K562 (cell line): ENCODE measurements at regions of chr19 and their contacts with region 1.

Region 1: DNA sequence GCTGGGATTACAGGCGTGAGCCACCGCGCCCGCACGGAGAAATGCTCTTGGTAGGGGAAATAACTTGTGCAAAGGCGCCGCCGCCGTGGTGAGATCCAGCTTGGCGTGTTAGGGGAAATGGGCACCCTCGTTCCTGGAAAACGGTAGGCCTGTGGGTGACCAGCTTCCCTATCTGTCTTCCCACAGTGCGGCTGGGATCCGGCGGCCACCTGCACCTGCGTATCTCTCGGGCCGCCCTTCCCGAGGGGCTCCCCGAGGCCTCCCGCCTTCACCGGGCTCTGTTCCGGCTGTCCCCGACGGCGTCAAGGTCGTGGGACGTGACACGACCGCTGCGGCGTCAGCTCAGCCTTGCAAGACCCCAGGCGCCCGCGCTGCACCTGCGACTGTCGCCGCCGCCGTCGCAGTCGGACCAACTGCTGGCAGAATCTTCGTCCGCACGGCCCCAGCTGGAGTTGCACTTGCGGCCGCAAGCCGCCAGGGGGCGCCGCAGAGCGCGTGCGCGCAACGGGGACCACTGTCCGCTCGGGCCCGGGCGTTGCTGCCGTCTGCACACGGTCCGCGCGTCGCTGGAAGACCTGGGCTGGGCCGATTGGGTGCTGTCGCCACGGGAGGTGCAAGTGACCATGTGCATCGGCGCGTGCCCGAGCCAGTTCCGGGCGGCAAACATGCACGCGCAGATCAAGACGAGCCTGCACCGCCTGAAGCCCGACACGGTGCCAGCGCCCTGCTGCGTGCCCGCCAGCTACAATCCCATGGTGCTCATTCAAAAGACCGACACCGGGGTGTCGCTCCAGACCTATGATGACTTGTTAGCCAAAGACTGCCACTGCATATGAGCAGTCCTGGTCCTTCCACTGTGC is 2.4 kb downstream of the GDF15 start:
- DNase-seq: peak; percentile 88 to 92 (median 90)
- ATAC-seq: peak; percentile 55
- H3K4me3 ChIP-seq: peak overlapping the region; percentile 89
- H3K27ac ChIP-seq: peak overlapping the region; percentile 84
- H3K4me1 ChIP-seq: peaks cover 17 to 47% of the 10 kb centered on the region in 2 experiments
- H3K27me3 ChIP-seq: no peaks in the 10 kb centered on the region
- CTCF ChIP-seq: peak; percentile 95 to 97 (median 96)
- EP300 ChIP-seq: peak; percentile 7; the same call in 1 of the 2 replicates
- POLR2A ChIP-seq: peak; percentile 64
- RAD21 ChIP-seq: peak; percentile 60 to 70

Region 2: GRCh38 chr19:18192673-18193387 is 195.5 kb before region 1 on chr19 and contains the start of gene MPV17L2:
- CTCF ChIA-PET with region 1: no interaction called
- POLR2A ChIA-PET with region 1: interaction called, 10 read pairs
- in situ Hi-C with region 1: no loop called
- intact Hi-C with region 1: no loop called
- DNase-seq: peak; percentile 89 to 100 (median 94)
- ATAC-seq: peak; percentile 93
- H3K4me3 ChIP-seq: peak within 1 kb of the TSS; percentile 89
- H3K27ac ChIP-seq: peak within 1 kb of the TSS; percentile 80
- H3K4me1 ChIP-seq: peaks cover 17 to 46% of the 10 kb centered on the region in 2 experiments; a peak in 4 of 5 replicates
- H3K27me3 ChIP-seq: no peaks in the 10 kb centered on the region
- CTCF ChIP-seq: no peak
- EP300 ChIP-seq: no peak
- POLR2A ChIP-seq: peak; percentile 83
- RAD21 ChIP-seq: no peak
- polyA plus RNA-seq, gene MPV17L2: 10.6 to 11.0 TPM

Region 3: DNA sequence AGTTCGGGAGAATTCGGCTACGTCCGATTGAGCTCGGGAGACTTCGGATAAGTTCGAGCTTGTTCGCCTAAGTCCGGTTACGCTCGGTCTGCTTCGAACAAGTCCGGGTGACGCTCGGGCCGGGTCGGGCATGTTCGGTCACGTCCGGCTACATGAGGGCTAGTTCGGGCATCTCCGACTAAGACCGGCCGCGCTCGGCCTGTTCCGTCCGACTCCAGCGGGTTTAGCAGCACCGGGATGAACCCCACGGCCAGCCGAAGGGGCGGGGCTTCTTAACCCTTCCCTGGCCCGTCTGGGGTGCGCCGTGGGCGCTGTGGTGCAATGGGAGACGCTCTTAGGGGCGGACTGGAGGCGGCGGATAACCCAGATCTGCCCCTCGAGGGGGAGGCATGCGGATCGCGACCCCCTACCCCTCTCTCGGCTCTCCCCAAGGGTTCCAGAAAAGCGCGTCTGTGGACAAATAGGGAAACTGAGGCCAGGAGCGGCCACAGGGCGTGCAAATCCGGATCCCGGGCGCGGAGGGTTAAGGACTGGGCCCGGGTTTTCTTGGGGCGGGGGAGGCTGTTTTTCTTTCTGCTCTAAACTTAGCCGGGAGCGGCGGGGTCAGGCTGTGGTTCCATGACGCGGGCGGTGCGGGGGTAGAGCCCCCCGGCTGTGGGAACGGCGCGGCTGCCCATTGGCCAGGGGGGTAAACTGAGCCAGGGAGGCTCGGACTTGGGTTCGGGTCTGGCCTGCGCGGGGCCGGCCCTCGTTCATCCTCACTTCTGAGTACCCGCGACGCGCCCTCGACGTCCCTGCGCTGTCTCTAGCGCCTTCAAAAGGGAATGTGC is 163.6 kb before region 1 on chr19:
- CTCF ChIA-PET with region 1: no interaction called
- POLR2A ChIA-PET with region 1: interaction called, 12 read pairs
- in situ Hi-C with region 1: no loop called
- intact Hi-C with region 1: no loop called
- DNase-seq: peak; percentile 94 to 99 (median 96)
- ATAC-seq: peak; percentile 97
- H3K4me3 ChIP-seq: peak overlapping the region; percentile 48
- H3K27ac ChIP-seq: peak overlapping the region; percentile 84
- H3K4me1 ChIP-seq: peaks cover 23 to 61% of the 10 kb centered on the region in 2 experiments; a peak in 4 of 5 replicates
- H3K27me3 ChIP-seq: no peaks in the 10 kb centered on the region; a peak in 1 of 5 replicates
- CTCF ChIP-seq: no peak
- EP300 ChIP-seq: no peak
- POLR2A ChIP-seq: no peak
- RAD21 ChIP-seq: no peak

Region 4: GRCh38 chr19:18328340-18329034 is 59.8 kb before region 1 on chr19:
- CTCF ChIA-PET with region 1: interaction called, 3 read pairs
- POLR2A ChIA-PET with region 1: interaction called, 21 read pairs
- in situ Hi-C with region 1: no loop called
- intact Hi-C with region 1: no loop called
- DNase-seq: peak; percentile 96 to 99 (median 98)
- ATAC-seq: peak; percentile 100
- H3K4me3 ChIP-seq: peak overlapping the region; percentile 33
- H3K27ac ChIP-seq: peak overlapping the region; percentile 63
- H3K4me1 ChIP-seq: peaks cover 22 to 35% of the 10 kb centered on the region in 2 experiments
- H3K27me3 ChIP-seq: no peaks in the 10 kb centered on the region
- CTCF ChIP-seq: peak; percentile 87 to 97 (median 96)
- EP300 ChIP-seq: no peak
- POLR2A ChIP-seq: no peak; the same call in 1 of the 2 replicates
- RAD21 ChIP-seq: peak; percentile 85 to 87

Region 5: GRCh38 chr19:18340190-18340989 is 47.9 kb before region 1 on chr19 and contains the start of gene PGPEP1:
- CTCF ChIA-PET with region 1: interaction called, 4 read pairs
- POLR2A ChIA-PET with region 1: interaction called, 18 read pairs
- in situ Hi-C with region 1: no loop called
- intact Hi-C with region 1: loop called (anchors 5 kb)
- DNase-seq: peak; percentile 86 to 97 (median 94)
- ATAC-seq: peak; percentile 76
- H3K4me3 ChIP-seq: peak within 1 kb of the TSS; percentile 97
- H3K27ac ChIP-seq: peak within 1 kb of the TSS; percentile 92
- H3K4me1 ChIP-seq: peaks cover 9 to 40% of the 10 kb centered on the region in 2 experiments; a peak in 4 of 5 replicates
- H3K27me3 ChIP-seq: no peaks in the 10 kb centered on the region
- CTCF ChIP-seq: no peak
- EP300 ChIP-seq: no peak
- POLR2A ChIP-seq: peak; percentile 71
- RAD21 ChIP-seq: no peak
- polyA plus RNA-seq, gene PGPEP1: 10.0 to 13.4 TPM

Region 6: DNA sequence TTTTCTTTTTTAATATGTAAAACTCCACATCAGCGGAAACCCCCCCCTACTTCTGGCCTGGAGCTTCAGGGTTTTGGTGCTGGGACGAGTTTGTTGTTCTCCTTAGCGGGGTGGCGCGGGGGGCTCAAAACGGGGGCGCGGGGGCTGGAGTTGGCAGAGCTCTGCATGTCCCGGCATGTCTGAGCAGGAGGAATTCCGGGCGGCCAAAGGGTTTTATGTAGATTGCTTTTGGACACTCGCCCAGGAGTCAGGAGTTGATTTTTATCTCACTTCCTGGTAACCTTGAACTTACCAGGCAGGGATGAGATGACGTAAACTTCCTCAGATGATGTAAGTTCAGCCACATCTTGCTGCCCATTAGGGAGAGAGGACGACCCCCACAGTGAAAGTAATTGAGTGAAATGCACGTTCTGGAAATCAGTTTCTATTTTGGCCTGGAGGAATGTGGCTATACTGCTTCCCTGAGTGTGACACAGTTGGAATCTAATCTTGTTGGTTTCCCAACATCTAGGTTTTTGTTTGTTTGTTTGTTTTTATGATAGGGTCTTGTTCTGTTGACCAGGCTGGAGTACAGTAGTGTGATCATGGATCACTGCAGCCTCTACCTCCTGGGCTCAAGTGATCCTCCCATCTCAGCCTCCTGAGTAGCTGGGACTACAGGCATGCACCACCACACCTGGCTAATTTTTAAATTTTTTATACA is 23.4 kb before region 1 on chr19:
- CTCF ChIA-PET with region 1: no interaction called
- POLR2A ChIA-PET with region 1: interaction called, 207 read pairs
- in situ Hi-C with region 1: no loop called
- intact Hi-C with region 1: loop called (anchors 2 kb)
- DNase-seq: peak; percentile 56 to 95 (median 77)
- ATAC-seq: peak; percentile 83
- H3K4me3 ChIP-seq: no peak overlapping the region; the same call in 1 of the 2 replicates
- H3K27ac ChIP-seq: peak overlapping the region; percentile 99
- H3K4me1 ChIP-seq: peaks cover 49 to 59% of the 10 kb centered on the region in 2 experiments
- H3K27me3 ChIP-seq: no peaks in the 10 kb centered on the region
- CTCF ChIP-seq: no peak
- EP300 ChIP-seq: peak; percentile 98
- POLR2A ChIP-seq: peak; percentile 55
- RAD21 ChIP-seq: no peak; a peak in 1 of 4 replicates

Region 7: GRCh38 chr19:18401580-18402112 is 13.3 kb after region 1 on chr19:
- CTCF ChIA-PET with region 1: interaction called, 3 read pairs
- POLR2A ChIA-PET with region 1: interaction called, 80 read pairs
- in situ Hi-C with region 1: no loop called
- intact Hi-C with region 1: no loop called
- DNase-seq: peak; percentile 39 to 85 (median 56)
- ATAC-seq: peak; percentile 94
- H3K4me3 ChIP-seq: no peak overlapping the region
- H3K27ac ChIP-seq: peak overlapping the region; percentile 52; the same call in 1 of the 3 replicates
- H3K4me1 ChIP-seq: peaks cover 12 to 21% of the 10 kb centered on the region in 2 experiments
- H3K27me3 ChIP-seq: no peaks in the 10 kb centered on the region
- CTCF ChIP-seq: peak; percentile 69 to 77 (median 71)
- EP300 ChIP-seq: no peak
- POLR2A ChIP-seq: no peak
- RAD21 ChIP-seq: peak; percentile 58 to 61